ENCODE measurements at regions of chr17 and their contacts with region 1.

Region 1: DNA sequence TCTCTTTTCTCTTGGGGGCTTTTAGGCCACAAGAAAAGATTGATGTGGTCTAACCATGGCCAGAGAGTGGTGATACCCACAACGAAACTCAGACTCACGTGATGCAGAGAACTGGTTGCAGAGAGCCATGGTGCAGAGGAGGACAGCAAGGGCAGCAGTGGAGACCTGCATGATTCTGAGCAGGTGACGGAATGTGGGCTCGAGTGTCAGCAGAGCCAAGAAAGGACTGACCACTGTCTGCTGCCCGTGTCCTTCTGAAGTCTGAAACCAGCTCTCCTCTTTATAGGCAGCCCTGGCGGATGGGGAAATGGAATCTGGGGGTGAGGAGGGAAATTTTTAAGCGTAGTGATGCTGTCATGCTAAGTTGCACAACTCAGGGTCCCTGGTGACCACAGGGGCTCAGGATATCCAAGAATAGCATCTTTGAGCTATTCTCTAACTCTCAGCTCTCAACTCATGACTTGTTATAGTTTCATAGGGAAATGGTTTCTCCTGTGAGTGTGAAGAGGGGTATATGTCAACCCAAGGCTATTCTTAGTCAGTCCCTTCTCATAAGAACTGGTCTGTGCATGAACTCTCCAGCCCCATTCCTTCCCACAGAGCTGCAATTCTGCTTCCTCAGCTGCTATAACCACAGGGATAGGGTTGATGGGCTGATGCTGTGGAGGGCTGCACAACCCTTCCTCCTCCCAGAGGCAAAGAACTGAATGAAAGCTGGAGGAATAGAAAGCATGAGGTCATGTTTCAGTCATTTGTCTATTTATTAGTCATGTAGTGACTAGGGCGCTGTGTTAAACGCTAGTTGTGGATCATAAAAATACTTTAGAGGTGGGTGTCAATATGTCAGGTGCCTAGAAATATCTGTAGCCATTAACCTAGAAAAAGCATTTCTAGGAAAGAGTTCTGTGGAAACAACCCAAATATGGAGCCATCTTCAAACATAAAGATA is at the start of gene CCL3:
- DNase-seq: peak; percentile 60 to 70
- ATAC-seq: peak; percentile 57 to 77 (median 71)
- H3K4me3 ChIP-seq: peak within 1 kb of the TSS; percentile 33
- H3K4me3 Mint-ChIP-seq: peak within 1 kb of the TSS; percentile 91
- H3K27ac ChIP-seq: peak within 1 kb of the TSS; percentile 87
- H3K27ac Mint-ChIP-seq: peak within 1 kb of the TSS; percentile 100
- H3K4me1 ChIP-seq: peaks cover 55% of the 10 kb centered on the region
- H3K4me1 Mint-ChIP-seq: peaks cover 90 to 91% of the 10 kb centered on the region in 2 donors
- H3K27me3 ChIP-seq: no peaks in the 10 kb centered on the region
- H3K27me3 Mint-ChIP-seq: no peaks in the 10 kb centered on the region
- CTCF ChIP-seq: no peak
- total RNA-seq, gene CCL3: 381 to 547 (median 450) TPM

Region 2: GRCh38 chr17:35889818-35890763 is 200.1 kb before region 1 on chr17:
- intact Hi-C with region 1: loop called (anchors 5 kb)
- DNase-seq: peak in 1 of 2 donors; percentile 62
- ATAC-seq: peak; percentile 21 to 51 (median 32)
- H3K4me3 ChIP-seq: no peak overlapping the region
- H3K4me3 Mint-ChIP-seq: peak overlapping the region; percentile 80
- H3K27ac ChIP-seq: peak overlapping the region; percentile 76
- H3K27ac Mint-ChIP-seq: peak overlapping the region; percentile 97 to 98
- H3K4me1 ChIP-seq: peaks cover 79% of the 10 kb centered on the region
- H3K4me1 Mint-ChIP-seq: peaks cover 67 to 82% of the 10 kb centered on the region in 2 donors
- H3K27me3 ChIP-seq: no peaks in the 10 kb centered on the region
- H3K27me3 Mint-ChIP-seq: no peaks in the 10 kb centered on the region
- CTCF ChIP-seq: no peak

Region 3: GRCh38 chr17:36107660-36108059 is 17.5 kb after region 1 on chr17:
- intact Hi-C with region 1: loop called (anchors 1 kb)
- DNase-seq: peak in 1 of 2 donors; percentile 59
- ATAC-seq: peak; percentile 23 to 45 (median 31)
- H3K4me3 ChIP-seq: no peak overlapping the region
- H3K4me3 Mint-ChIP-seq: peak overlapping the region; percentile 74
- H3K27ac ChIP-seq: peak overlapping the region; percentile 82
- H3K27ac Mint-ChIP-seq: peak overlapping the region; percentile 94 to 96
- H3K4me1 ChIP-seq: peaks cover 61% of the 10 kb centered on the region
- H3K4me1 Mint-ChIP-seq: peaks cover 78 to 98% of the 10 kb centered on the region in 2 donors
- H3K27me3 ChIP-seq: no peaks in the 10 kb centered on the region
- H3K27me3 Mint-ChIP-seq: no peaks in the 10 kb centered on the region
- CTCF ChIP-seq: no peak

Region 4: GRCh38 chr17:36188891-36189306 is 98.7 kb after region 1 on chr17:
- intact Hi-C with region 1: loop called (anchors 2 kb)
- DNase-seq: peak; percentile 85 to 88
- ATAC-seq: peak; percentile 78 to 90 (median 89)
- H3K4me3 ChIP-seq: no peak overlapping the region
- H3K4me3 Mint-ChIP-seq: peak overlapping the region; percentile 79
- H3K27ac ChIP-seq: peak overlapping the region; percentile 47
- H3K27ac Mint-ChIP-seq: peak overlapping the region; percentile 93 to 98
- H3K4me1 ChIP-seq: peaks cover 80% of the 10 kb centered on the region
- H3K4me1 Mint-ChIP-seq: peaks cover 92 to 96% of the 10 kb centered on the region in 2 donors
- H3K27me3 ChIP-seq: no peaks in the 10 kb centered on the region
- H3K27me3 Mint-ChIP-seq: no peaks in the 10 kb centered on the region
- CTCF ChIP-seq: no peak

Region 5: GRCh38 chr17:37160944-37161343 is 1070.8 kb after region 1 on chr17:
- intact Hi-C with region 1: no loop called
- DNase-seq: no peak
- ATAC-seq: no peak
- H3K4me3 ChIP-seq: no peak overlapping the region
- H3K4me3 Mint-ChIP-seq: no peak overlapping the region
- H3K27ac ChIP-seq: no peak overlapping the region
- H3K27ac Mint-ChIP-seq: no peak overlapping the region
- H3K4me1 ChIP-seq: no peaks in the 10 kb centered on the region
- H3K4me1 Mint-ChIP-seq: no peaks in the 10 kb centered on the region
- H3K27me3 ChIP-seq: no peaks in the 10 kb centered on the region
- H3K27me3 Mint-ChIP-seq: no peaks in the 10 kb centered on the region
- CTCF ChIP-seq: no peak